Esophagus muscularis mucosa (tissue), 4 donors: ENCODE measurements at regions of chr16 and their contacts with region 1.

Region 1: GRCh38 chr16:56600398-56600999 is 7.9 kb upstream of the MT2A start:
- DNase-seq: no peak
- H3K4me3 ChIP-seq: no peak overlapping the region
- H3K27ac ChIP-seq: no peak overlapping the region
- H3K4me1 ChIP-seq: peaks cover 0 to 3% (median under 1%) of the 10 kb centered on the region in 4 donors
- H3K27me3 ChIP-seq: no peaks in the 10 kb centered on the region
- CTCF ChIP-seq: peak; percentile 54 to 69 (median 57)
- EP300 ChIP-seq: no peak
- POLR2A ChIP-seq: no peak

Region 2: DNA sequence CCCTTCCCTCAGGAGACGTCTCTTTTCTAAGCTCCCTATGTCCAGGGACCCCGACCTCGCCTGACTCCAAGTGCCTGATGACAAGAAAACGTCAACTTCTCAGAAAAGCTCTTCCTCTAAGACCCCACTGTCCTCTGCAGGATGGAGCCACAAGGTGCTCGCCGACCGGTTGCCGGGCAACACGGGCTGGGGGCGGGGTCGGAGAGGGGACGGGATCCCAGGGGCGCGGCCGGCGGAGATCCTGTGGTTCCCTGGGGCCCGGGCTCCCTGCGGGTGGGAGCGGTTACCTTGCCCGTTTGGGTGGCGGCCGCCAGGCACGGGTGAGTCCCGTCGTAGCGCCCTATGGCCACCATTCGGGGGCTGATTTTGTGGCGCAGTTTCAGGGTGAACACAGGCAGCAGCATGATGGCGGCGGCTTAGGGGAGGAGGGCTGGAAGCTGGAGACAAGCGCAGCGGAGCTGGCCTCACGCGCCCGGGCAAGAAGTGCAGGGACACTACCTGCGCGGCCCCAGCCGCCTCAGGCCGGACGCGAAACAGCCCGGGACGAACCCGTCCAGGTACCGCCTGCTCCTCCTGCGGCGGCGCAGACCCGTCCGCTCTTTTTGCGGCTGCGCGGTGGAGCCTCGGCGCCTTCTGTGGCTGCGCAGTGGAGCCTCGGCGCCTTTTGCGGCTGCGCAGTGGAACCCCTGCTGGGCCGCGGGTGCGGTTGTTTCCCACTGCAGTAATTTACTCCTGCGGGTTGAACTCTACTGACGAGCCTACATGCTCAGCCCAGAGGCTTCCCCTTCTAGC is 80.8 kb before region 1 on chr16 and contains the start of gene BBS2:
- intact Hi-C with region 1: loop called (anchors 5 kb)
- DNase-seq: peak; percentile 96
- H3K4me3 ChIP-seq: peak within 1 kb of the TSS; percentile 78 to 99 (median 98)
- H3K27ac ChIP-seq: peak within 1 kb of the TSS; percentile 86 to 91 (median 86)
- H3K4me1 ChIP-seq: peaks cover 32 to 51% (median 43%) of the 10 kb centered on the region in 4 donors
- H3K27me3 ChIP-seq: no peaks in the 10 kb centered on the region
- CTCF ChIP-seq: peak in 1 of 3 experiments; percentile 4
- EP300 ChIP-seq: no peak
- POLR2A ChIP-seq: peak; percentile 60
- total RNA-seq, gene BBS2: 33.2 to 47.8 (median 39.0) TPM

Region 3: DNA sequence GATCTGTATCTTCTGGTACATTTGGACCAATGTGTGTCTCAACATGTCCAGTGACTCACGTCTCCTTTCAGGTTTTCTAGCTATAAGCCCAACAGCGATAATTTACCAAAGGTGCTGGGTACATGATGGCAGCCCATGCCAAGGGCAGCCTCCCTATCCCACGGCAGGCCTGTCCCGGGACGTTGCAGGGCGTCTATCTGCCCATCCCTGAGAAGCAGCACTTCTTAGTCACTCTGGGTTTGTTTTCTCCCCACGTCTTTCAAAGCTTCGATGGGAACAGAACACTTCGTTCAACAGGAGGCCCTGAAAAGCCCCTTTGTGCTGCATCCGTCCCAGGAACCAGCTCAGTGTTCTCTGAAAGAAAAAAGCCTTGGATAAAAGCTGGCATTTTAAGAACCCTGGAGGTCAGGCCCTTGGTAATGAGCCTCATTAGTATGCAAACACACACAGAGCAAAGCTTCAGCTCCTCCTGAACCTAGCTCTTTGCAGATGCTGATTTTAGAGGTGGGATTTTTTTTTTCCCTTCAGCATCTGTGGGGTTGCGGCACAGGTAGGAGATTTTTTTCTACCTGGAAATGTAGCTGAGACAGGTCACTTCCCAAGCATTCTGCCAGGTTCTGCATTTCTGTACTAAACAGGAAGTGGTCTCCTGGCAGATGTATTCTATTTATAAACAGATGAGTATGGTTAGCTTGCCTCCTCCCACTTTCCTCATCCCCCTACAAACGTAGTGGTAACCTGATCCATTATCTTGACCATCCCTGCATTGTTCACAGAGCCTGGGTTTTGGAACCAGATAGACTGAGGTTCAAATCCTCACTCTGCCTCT is 53.2 kb before region 1 on chr16:
- intact Hi-C with region 1: no loop called
- DNase-seq: no peak
- H3K4me3 ChIP-seq: no peak overlapping the region
- H3K27ac ChIP-seq: peak overlapping the region; percentile 28 to 65 (median 52)
- H3K4me1 ChIP-seq: peaks cover 8 to 11% (median 9%) of the 10 kb centered on the region in 4 donors
- H3K27me3 ChIP-seq: peaks cover 0 to 12% (median 0%) of the 10 kb centered on the region in 4 donors
- CTCF ChIP-seq: no peak
- EP300 ChIP-seq: no peak
- POLR2A ChIP-seq: no peak